ENCODE measurements at regions of chr1 and their contacts with region 1.

Region 1: GRCh38 chr1:6962996-6963911 is 178.0 kb downstream of the CAMTA1 start:
- DNase-seq: peak; percentile 29
- H3K4me3 Mint-ChIP-seq: peak overlapping the region; percentile 63
- H3K27ac Mint-ChIP-seq: peak overlapping the region; percentile 74
- H3K4me1 Mint-ChIP-seq: peaks cover 12% of the 10 kb centered on the region
- H3K27me3 Mint-ChIP-seq: peaks cover 21% of the 10 kb centered on the region

Region 2: DNA sequence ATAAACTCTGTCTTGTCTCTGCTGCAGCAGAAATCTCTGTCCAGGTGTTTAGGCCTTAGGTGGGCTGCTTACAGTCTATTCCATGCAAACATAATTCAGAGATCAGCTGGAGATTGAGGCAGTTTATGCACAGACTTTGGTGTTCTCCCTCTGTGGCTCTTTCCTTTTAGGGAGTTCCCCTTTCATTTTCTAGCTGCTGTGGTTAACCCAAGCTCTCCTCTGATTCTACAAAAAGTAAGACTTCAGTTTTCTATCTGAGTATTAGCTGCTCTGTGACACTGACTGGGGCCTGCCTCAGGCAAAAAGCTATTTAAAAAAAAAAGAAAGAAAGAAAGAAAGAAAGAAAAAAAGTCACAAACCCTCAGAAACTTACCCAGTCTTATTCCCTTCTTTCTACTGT is 33.1 kb after region 1 on chr1:
- intact Hi-C with region 1: loop called (anchors 1 kb)
- DNase-seq: no peak
- H3K4me3 Mint-ChIP-seq: no peak overlapping the region
- H3K27ac Mint-ChIP-seq: no peak overlapping the region
- H3K4me1 Mint-ChIP-seq: peaks cover 14% of the 10 kb centered on the region
- H3K27me3 Mint-ChIP-seq: peaks cover 30% of the 10 kb centered on the region